ENCODE measurements at regions of chr1 and their contacts with region 1.

Region 1: DNA sequence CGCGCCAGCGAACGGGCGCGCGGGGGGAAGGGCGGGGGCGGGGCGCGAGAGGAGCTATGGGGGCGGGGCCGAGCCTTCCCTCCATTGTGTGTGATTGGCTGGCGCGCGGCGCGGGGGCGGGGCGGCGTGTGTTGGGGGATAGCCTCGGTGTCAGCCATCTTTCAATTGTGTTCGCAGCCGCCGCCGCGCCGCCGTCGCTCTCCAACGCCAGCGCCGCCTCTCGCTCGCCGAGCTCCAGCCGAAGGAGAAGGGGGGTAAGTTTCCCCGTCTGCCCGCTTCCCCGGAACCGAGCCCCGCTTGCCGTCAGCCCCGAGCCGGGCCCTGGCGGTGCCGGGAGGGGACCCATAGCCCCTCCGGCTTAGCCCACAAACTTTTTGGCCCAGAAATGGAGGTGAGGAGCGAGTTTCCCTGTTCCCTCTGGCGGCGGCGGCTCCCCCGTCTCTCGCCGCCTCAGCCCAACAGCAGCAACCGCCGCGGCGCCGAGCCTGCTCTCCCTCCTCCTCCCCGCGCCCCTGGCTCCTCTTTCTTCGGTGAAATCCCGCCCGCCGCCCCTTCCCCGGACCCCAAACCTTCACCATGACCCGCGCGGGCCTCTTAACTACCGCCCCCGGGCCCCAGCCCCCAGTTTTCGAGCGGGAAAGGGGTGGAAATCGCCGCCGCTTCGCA is at the start of gene H3-3A:
- DNase-seq: peak; percentile 99 to 100 (median 100)
- ATAC-seq: peak; percentile 95
- H3K4me3 ChIP-seq: peak within 1 kb of the TSS; percentile 96
- H3K27ac ChIP-seq: peak within 1 kb of the TSS; percentile 100
- H3K4me1 ChIP-seq: no peaks in the 10 kb centered on the region
- H3K27me3 ChIP-seq: no peaks in the 10 kb centered on the region
- total RNA-seq, gene H3-3A: 304 to 344 (median 328) TPM

Region 2: GRCh38 chr1:226001963-226002666 is 60.6 kb before region 1 on chr1:
- intact Hi-C with region 1: loop called in 2 of 4 experiments (anchors 2 to 5 kb)
- DNase-seq: peak; percentile 67 to 70 (median 68)
- ATAC-seq: peak; percentile 23 to 67
- H3K4me3 ChIP-seq: no peak overlapping the region
- H3K27ac ChIP-seq: peak overlapping the region; percentile 71
- H3K4me1 ChIP-seq: peaks cover 2% of the 10 kb centered on the region
- H3K27me3 ChIP-seq: no peaks in the 10 kb centered on the region

Region 3: DNA sequence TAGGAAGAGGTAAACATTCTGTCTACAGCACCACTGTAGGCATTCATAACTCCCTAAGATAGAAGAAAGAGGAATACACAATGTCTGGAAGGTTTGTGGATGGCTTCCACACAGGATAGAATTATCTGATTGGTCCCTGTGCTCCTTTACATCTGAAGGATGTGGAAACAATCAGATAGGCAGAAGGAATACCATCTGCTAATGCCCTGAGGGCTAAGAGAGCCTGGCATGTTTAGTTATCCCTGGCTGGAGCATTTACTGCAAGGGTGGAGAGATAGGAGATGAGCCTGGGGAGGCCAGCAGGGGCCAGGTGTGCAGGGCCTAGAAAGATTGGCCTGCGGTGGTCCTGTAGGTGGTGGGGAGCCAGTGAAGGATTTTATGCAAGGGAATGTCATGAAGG is 132.5 kb after region 1 on chr1:
- intact Hi-C with region 1: loop called in 1 of 4 experiments (anchors 10 kb)
- DNase-seq: no peak
- ATAC-seq: no peak
- H3K4me3 ChIP-seq: no peak overlapping the region
- H3K27ac ChIP-seq: no peak overlapping the region
- H3K4me1 ChIP-seq: no peaks in the 10 kb centered on the region
- H3K27me3 ChIP-seq: no peaks in the 10 kb centered on the region

Measured in right cardiac atrium (tissue), 5 donors.